Activated naive CD4-positive, alpha-beta T cell treated with anti-CD3 and anti-CD28 coated beads for 36 hours (primary cell): ENCODE measurements at regions of chr1 and their contacts with region 1.

Region 1: GRCh38 chr1:23149114-23149513 is 19.5 kb downstream of the LUZP1 start:
- DNase-seq: no peak
- H3K4me3 Mint-ChIP-seq: no peak overlapping the region
- H3K27ac Mint-ChIP-seq: no peak overlapping the region
- H3K4me1 Mint-ChIP-seq: peaks cover 24% of the 10 kb centered on the region
- H3K27me3 Mint-ChIP-seq: no peaks in the 10 kb centered on the region

Region 2: DNA sequence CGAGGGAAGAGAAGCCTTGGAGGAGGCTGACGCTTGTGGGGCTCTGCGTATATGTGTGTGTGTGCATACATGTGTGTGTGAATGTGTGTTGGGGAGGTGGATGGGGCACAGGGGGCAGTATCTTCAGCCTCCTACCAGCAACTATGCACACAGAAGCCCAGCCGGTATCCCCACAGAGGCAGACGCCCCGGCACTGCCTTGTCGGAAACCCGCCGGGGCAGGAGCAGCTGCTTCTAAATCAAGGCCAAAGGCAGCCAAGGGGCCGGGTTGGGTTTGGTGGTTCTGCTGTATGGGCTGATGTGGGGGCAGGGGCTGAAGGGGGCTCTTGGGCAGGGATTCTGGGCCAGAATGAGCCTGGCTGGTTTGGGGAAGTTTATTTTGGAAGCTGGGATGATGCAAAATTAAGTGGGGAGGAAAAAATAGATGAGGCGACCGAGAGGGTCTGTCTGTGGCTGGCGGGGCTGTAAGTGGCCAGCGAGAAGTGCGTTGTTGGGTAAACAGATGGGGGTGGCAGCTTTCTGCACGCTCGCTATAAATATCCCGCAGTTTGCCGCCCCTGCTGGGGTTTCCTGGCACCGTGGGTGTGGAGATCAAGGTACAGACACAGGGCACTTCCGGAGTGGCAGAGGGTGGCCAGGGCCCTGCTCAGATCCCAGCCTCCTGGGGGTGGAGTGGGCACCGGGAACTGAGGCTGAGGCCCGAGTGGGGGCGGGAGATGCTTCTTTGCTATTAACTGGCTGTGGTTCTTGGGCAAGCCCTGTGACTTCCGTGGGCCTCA is 995.3 kb before region 1 on chr1:
- CTCF ChIA-PET with region 1: no interaction called
- intact Hi-C with region 1: no loop called
- DNase-seq: no peak
- H3K4me3 Mint-ChIP-seq: no peak overlapping the region
- H3K27ac Mint-ChIP-seq: no peak overlapping the region
- H3K4me1 Mint-ChIP-seq: no peaks in the 10 kb centered on the region
- H3K27me3 Mint-ChIP-seq: peaks cover 10% of the 10 kb centered on the region

Region 3: GRCh38 chr1:23062271-23062670 is 86.8 kb before region 1 on chr1:
- CTCF ChIA-PET with region 1: no interaction called
- intact Hi-C with region 1: no loop called
- DNase-seq: no peak
- H3K4me3 Mint-ChIP-seq: no peak overlapping the region
- H3K27ac Mint-ChIP-seq: no peak overlapping the region
- H3K4me1 Mint-ChIP-seq: no peaks in the 10 kb centered on the region
- H3K27me3 Mint-ChIP-seq: no peaks in the 10 kb centered on the region

Region 4: DNA sequence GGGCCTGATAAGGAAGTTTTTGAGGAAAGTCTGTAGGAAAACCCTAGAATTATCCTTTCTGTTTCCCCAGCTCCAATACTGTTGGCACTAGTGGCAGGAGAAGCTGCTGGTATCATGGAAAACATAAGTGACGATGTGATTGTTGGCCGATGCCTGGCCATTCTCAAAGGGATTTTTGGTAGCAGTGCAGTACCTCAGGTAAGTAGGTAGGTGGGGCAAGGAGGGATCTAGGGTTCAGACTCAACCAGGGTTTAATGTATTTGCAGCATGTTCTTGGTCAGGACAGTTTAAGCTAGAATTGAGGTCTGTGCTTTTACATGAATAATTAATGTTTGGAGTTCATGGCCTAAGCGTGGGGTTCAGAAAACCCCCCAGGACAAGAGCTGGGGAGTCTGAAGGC is 67.7 kb before region 1 on chr1:
- CTCF ChIA-PET with region 1: no interaction called
- intact Hi-C with region 1: no loop called
- DNase-seq: no peak
- H3K4me3 Mint-ChIP-seq: no peak overlapping the region
- H3K27ac Mint-ChIP-seq: no peak overlapping the region
- H3K4me1 Mint-ChIP-seq: no peaks in the 10 kb centered on the region
- H3K27me3 Mint-ChIP-seq: no peaks in the 10 kb centered on the region

Region 5: DNA sequence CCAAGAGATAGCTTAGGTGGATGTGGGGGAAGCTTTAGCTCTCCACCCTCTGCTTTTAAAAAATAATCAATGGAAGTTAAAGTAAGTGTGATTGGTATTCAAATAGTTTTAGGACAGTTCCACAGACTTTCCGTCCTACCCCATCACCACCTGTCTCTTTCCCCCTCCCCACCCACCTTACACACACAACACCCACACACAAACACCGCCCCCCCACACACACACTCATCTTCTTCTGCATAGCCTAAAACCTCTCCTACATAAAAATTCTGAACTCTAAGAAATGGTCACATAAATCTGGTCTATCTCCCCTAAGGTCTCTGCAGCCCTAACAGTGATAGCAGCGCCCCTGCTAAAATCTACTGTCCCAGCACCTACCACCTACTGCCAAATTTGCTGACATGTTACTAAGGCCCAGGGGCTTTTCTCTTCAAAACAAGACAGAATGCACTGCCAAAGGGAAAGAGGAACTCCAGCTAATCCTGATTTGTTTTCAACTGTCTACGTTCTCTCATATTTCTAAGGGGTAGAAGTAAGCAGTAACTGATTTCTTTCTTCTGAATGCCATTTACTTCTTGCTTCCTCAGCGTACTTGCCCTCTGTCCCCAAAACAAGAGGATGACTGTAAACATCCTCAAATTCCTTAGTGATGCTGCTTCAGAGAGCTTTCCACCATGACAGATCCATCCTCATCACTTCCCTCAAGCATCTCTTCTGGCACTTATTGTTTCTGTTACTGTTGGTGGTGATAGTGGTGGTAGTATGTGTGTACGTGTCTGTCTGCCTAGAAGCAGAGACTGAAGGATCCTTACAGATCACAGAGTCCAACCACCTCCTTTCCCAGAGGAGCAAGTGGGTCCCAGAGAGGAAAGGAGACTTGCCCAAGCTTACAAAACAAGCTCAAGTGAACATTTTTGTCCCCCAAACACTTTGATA is 37.2 kb before region 1 on chr1:
- CTCF ChIA-PET with region 1: no interaction called
- intact Hi-C with region 1: loop called (anchors 2 kb)
- DNase-seq: no peak
- H3K4me3 Mint-ChIP-seq: no peak overlapping the region
- H3K27ac Mint-ChIP-seq: no peak overlapping the region
- H3K4me1 Mint-ChIP-seq: peaks cover 62% of the 10 kb centered on the region
- H3K27me3 Mint-ChIP-seq: no peaks in the 10 kb centered on the region

Region 6: DNA sequence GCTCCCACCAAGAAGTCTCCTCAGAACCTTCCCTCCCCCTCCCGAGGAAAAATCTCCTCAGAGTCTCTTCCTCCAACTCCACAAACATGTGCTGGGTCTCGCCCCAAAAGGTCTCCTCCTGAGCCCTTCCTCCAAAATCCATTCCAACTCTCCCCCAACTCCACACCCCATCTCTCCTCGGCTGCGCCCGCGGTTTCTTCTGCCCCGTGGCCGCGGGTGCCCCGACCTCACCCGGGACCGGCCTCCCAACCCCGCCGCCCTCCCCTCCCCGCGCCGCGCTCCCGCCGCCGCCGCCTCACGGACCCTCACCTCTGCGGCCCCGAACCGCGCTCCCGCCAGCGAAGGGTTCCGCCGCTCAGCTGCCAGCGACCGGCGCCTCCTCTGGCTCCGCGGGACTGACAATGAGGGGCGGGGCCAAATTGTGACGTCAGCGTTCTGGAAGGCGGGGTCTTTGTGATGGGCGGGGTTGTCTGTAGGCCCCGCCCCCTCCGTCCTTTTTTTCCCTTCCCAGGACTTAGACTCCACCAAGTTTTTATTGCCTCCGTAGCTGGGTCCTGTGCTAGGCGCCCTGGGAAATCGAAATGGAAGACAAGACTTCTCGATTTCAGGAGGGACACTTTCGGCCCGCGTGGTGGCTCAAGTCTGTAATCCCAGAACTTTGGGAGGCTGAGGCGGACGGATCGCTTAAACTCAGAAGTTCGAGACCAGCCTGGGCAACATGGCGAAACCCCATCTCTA is 19.5 kb after region 1 on chr1 and contains the start of gene LUZP1:
- CTCF ChIA-PET with region 1: no interaction called
- intact Hi-C with region 1: loop called (anchors 2 kb)
- DNase-seq: peak; percentile 93
- H3K4me3 Mint-ChIP-seq: peak within 1 kb of the TSS; percentile 98
- H3K27ac Mint-ChIP-seq: peak within 1 kb of the TSS; percentile 84
- H3K4me1 Mint-ChIP-seq: peaks cover 28% of the 10 kb centered on the region
- H3K27me3 Mint-ChIP-seq: no peaks in the 10 kb centered on the region
- total RNA-seq, gene LUZP1: 12.6 to 13.7 TPM